CD4-positive, alpha-beta T cell (primary cell): ENCODE measurements at regions of chr10 and their contacts with region 1.

Region 1: DNA sequence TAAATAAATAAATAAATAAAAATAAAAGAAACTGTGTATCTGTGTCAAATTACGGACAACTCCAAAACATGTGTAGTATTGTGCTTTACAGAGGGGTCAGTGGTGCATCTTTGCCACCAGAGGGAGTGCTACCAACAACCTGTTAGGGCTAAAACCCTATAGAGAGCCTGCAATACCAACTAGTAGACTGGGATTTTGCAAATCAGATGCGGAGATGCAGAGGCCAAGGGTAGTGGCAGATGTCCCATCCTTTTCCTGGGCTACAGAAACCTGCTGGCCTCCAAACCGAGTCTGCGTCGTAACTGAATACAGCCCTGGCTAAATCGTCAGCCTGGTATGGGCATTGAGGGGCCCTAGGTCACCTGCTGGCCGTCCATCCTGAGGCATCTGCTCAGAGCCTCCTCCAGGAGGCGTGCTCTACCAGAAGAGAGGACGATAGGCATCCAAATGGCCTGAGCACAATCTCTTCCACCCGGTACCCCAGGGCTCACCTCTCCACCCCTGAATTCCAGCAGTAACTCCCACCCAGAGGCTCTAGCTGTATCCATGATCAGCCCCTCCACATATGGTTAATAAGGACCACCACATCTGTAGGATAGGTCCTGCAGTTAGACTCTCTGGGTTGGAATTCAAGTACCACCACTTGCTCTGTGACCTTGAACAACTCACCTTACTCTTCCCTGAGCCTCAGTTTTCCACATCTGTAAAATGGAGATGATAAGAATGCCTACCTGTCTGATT is 6.2 kb upstream of the RRP12 start:
- DNase-seq: peak in 13 of 14 experiments; percentile 33 to 87 (median 50)
- ATAC-seq: peak; percentile 98
- H3K4me3 ChIP-seq: peak overlapping the region; percentile 29
- H3K4me3 Mint-ChIP-seq: peak overlapping the region; percentile 63
- H3K27ac ChIP-seq: no peak overlapping the region
- H3K27ac Mint-ChIP-seq: peak overlapping the region; percentile 78
- H3K4me1 ChIP-seq: peaks cover 10% of the 10 kb centered on the region
- H3K4me1 Mint-ChIP-seq: peaks cover 10% of the 10 kb centered on the region
- H3K27me3 ChIP-seq: no peaks in the 10 kb centered on the region
- H3K27me3 Mint-ChIP-seq: no peaks in the 10 kb centered on the region
- CTCF ChIP-seq: peak; percentile 86

Region 2: GRCh38 chr10:96998329-96998888 is 409.0 kb before region 1 on chr10:
- CTCF ChIA-PET with region 1: no interaction called
- POLR2A ChIA-PET with region 1: no interaction called
- intact Hi-C with region 1: no loop called
- DNase-seq: no peak
- ATAC-seq: no peak
- H3K4me3 ChIP-seq: no peak overlapping the region
- H3K4me3 Mint-ChIP-seq: no peak overlapping the region
- H3K27ac ChIP-seq: no peak overlapping the region
- H3K27ac Mint-ChIP-seq: no peak overlapping the region
- H3K4me1 ChIP-seq: no peaks in the 10 kb centered on the region
- H3K4me1 Mint-ChIP-seq: no peaks in the 10 kb centered on the region
- H3K27me3 ChIP-seq: no peaks in the 10 kb centered on the region
- H3K27me3 Mint-ChIP-seq: no peaks in the 10 kb centered on the region
- CTCF ChIP-seq: no peak

Region 3: GRCh38 chr10:97425964-97426775 is 18.8 kb after region 1 on chr10 and contains the start of gene PGAM1:
- CTCF ChIA-PET with region 1: interaction called, 5 read pairs
- POLR2A ChIA-PET with region 1: no interaction called
- intact Hi-C with region 1: loop called (anchors 1 to 2 kb)
- DNase-seq: peak; percentile 90 to 99 (median 94)
- ATAC-seq: peak; percentile 82
- H3K4me3 ChIP-seq: peak within 1 kb of the TSS; percentile 78
- H3K4me3 Mint-ChIP-seq: peak within 1 kb of the TSS; percentile 95
- H3K27ac ChIP-seq: peak within 1 kb of the TSS; percentile 75 to 85
- H3K27ac Mint-ChIP-seq: peak within 1 kb of the TSS; percentile 89
- H3K4me1 ChIP-seq: peaks cover 43% of the 10 kb centered on the region
- H3K4me1 Mint-ChIP-seq: peaks cover 46% of the 10 kb centered on the region
- H3K27me3 ChIP-seq: no peaks in the 10 kb centered on the region
- H3K27me3 Mint-ChIP-seq: no peaks in the 10 kb centered on the region
- CTCF ChIP-seq: peak; percentile 64
- total RNA-seq, gene PGAM1: 50.7 to 55.5 TPM

Region 4: DNA sequence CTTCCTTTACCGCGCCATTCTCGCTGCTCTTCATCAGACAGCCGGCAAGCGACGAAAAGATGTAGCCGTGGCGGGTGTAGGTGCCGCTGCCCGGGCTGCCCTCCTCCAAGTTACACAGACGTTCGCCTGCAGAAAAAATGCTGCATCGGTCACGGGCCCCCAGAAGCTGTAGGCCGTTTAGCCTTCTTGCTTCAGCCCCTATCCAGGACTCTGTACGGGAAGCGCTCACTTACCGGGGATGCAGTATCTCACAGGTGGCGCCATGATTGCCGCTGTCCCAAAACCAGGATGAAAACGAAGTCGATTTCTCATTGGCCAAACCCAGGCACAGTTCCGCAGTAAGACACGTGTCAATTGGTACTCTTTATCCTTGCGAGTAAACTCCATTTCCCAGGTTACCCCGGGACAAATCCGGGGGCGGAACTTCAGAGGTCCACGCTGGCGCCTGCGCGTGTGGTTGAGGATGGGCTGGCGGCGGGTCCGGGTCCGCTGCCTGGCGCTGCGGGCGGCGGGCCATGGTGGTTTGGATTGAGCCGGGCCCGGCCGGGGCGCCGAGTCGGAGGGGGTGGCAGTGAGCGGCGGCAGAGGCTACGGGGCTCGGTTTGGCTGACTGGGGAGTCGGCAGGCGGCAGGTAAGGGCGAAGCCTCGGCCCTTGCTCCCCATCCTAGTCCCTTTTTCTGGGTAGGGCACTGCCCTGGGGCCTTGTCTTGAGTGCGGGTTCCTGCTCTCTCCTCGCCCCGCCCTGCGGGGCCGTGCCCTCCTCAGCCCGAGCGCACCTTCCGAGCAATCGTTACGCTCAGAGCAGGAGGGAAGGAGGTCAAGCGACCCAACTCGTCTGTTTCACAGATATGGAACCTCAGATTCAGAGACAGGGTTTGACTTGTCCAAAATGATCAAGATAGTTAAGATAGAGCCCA is 38.6 kb after region 1 on chr10 and contains the starts of genes EXOSC1 and ZDHHC16:
- CTCF ChIA-PET with region 1: no interaction called
- POLR2A ChIA-PET with region 1: no interaction called
- intact Hi-C with region 1: loop called (anchors 1 to 2 kb)
- DNase-seq: peak; percentile 73 to 95 (median 86)
- ATAC-seq: peak; percentile 97
- H3K4me3 ChIP-seq: peak within 1 kb of the TSS; percentile 78
- H3K4me3 Mint-ChIP-seq: peak within 1 kb of the TSS; percentile 100
- H3K27ac ChIP-seq: peak within 1 kb of the TSS; percentile 57 to 73
- H3K27ac Mint-ChIP-seq: peak within 1 kb of the TSS; percentile 95
- H3K4me1 ChIP-seq: peaks cover 33% of the 10 kb centered on the region
- H3K4me1 Mint-ChIP-seq: peaks cover 53% of the 10 kb centered on the region
- H3K27me3 ChIP-seq: no peaks in the 10 kb centered on the region
- H3K27me3 Mint-ChIP-seq: no peaks in the 10 kb centered on the region
- CTCF ChIP-seq: no peak
- total RNA-seq, gene EXOSC1: 28.8 to 29.7 TPM
- total RNA-seq, gene ZDHHC16: 6.2 to 6.5 TPM

Region 5: DNA sequence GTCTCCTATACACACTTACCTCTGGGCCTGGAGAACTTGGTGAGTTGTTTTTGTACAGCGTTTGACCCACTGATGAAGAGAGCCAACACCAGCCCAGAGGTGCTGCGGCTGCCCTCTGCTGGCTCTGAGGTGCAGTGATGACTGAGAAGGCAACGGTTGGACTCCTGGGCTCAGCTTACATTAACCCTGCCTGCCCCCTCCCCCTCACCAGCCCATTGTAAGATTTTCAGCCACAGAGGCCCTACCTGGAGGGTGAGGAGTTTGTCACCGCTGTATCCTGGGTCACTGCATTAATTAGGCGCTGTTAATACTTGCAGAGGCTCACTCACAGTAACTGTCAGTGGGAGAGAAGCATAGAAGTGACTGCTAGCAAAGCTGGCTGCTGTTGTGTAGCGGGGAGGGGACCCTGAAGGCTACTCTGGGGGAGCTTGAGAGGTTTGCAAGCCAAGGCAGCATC is 146.2 kb after region 1 on chr10:
- CTCF ChIA-PET with region 1: interaction called, 3 read pairs
- POLR2A ChIA-PET with region 1: no interaction called
- intact Hi-C with region 1: loop called (anchors 1 kb)
- DNase-seq: peak; percentile 30 to 75 (median 54)
- ATAC-seq: peak; percentile 94
- H3K4me3 ChIP-seq: no peak overlapping the region
- H3K4me3 Mint-ChIP-seq: no peak overlapping the region
- H3K27ac ChIP-seq: no peak overlapping the region
- H3K27ac Mint-ChIP-seq: no peak overlapping the region
- H3K4me1 ChIP-seq: peaks cover 4% of the 10 kb centered on the region
- H3K4me1 Mint-ChIP-seq: no peaks in the 10 kb centered on the region
- H3K27me3 ChIP-seq: no peaks in the 10 kb centered on the region
- H3K27me3 Mint-ChIP-seq: no peaks in the 10 kb centered on the region
- CTCF ChIP-seq: peak; percentile 83

Region 6: DNA sequence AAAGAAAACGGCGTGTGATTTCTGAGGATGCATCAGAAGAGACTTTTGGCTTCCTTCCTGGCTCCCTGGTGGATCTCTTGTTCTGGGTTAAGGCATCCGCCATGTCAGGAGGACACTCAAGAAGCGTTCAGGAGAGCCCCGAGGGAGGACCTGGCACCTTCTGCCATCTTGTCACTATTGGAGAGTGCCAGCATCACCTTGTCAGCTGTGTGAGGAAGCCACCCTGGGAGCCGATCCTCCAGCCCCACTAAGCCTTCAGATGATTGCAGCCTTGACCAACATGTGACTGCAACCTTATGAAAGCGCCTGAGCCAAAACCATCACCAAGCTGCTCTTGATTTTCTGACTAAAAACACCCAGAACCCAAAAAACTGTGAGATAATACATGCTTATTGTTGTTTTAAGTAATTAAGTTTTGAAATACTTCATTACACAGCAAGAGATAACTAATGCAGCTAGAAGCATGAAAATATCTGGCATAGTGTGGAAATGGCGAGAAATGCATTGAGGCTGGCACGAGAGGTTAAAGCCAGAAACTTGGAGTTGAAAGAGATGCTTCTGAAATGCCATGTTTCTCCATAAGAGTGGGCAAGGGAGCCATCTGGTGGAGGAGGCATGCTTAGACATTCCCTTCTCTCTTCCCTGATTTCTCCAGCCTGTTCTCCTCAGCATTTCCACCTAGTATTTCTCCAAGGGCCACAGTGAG is 324.1 kb after region 1 on chr10:
- CTCF ChIA-PET with region 1: no interaction called
- POLR2A ChIA-PET with region 1: no interaction called
- intact Hi-C with region 1: loop called (anchors 5 kb)
- DNase-seq: peak; percentile 27 to 82 (median 48)
- ATAC-seq: peak; percentile 75
- H3K4me3 ChIP-seq: no peak overlapping the region
- H3K4me3 Mint-ChIP-seq: no peak overlapping the region
- H3K27ac ChIP-seq: no peak overlapping the region
- H3K27ac Mint-ChIP-seq: no peak overlapping the region
- H3K4me1 ChIP-seq: peaks cover 8% of the 10 kb centered on the region
- H3K4me1 Mint-ChIP-seq: peaks cover 12% of the 10 kb centered on the region
- H3K27me3 ChIP-seq: no peaks in the 10 kb centered on the region
- H3K27me3 Mint-ChIP-seq: peaks cover 8% of the 10 kb centered on the region
- CTCF ChIP-seq: peak; percentile 83